ENCODE measurements at regions of chr1 and their contacts with region 1.

Region 1: DNA sequence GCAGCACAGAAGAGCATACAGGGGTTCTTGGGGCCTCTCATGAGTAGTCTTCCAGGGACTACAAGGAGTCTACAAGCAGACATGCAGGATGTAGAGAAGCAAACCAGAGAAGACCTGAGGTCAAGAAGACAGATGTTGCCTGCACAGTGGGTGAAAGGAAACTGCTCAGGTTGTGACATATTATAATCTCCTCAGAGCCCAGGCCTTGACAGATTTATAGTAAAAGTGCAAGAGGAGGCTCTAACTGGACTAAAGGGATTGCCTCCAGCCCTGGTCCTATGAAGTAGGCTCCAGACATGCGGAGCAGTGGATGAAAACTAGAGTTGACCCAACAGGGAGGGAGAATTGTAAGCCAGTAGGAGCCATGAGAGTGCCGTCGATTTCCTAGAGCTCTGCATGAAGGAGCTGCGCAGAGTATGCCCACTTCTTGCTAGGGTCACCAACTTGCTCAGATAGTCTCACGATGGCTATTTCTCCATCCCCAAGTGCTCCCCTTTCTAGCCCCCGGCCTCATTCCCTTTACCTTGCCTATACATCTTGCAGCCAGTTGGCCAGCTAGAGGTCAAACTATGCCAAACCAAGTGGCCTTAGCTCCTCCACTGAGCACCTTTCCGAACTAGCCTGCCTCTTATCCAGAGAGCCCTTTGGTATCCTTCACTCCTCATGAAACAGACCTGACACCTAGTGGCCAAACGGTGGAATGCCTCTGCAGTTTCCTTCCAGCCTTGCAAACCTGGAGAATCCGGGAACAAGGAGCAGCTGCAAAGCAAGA is 36.2 kb upstream of the IPO9 start:
- DNase-seq: peak; percentile 96
- H3K4me3 Mint-ChIP-seq: no peak overlapping the region
- H3K27ac Mint-ChIP-seq: no peak overlapping the region
- H3K4me1 Mint-ChIP-seq: peaks cover 32% of the 10 kb centered on the region
- H3K27me3 Mint-ChIP-seq: no peaks in the 10 kb centered on the region
- CTCF ChIP-seq: peak; percentile 100

Region 2: GRCh38 chr1:201530741-201531531 is 261.8 kb before region 1 on chr1:
- CTCF ChIA-PET with region 1: interaction called, 54 read pairs
- POLR2A ChIA-PET with region 1: no interaction called
- intact Hi-C with region 1: loop called (anchors 1 kb)
- DNase-seq: peak; percentile 91
- H3K4me3 Mint-ChIP-seq: no peak overlapping the region
- H3K27ac Mint-ChIP-seq: peak overlapping the region; percentile 46
- H3K4me1 Mint-ChIP-seq: peaks cover 9% of the 10 kb centered on the region
- H3K27me3 Mint-ChIP-seq: no peaks in the 10 kb centered on the region
- CTCF ChIP-seq: peak; percentile 99

Region 3: DNA sequence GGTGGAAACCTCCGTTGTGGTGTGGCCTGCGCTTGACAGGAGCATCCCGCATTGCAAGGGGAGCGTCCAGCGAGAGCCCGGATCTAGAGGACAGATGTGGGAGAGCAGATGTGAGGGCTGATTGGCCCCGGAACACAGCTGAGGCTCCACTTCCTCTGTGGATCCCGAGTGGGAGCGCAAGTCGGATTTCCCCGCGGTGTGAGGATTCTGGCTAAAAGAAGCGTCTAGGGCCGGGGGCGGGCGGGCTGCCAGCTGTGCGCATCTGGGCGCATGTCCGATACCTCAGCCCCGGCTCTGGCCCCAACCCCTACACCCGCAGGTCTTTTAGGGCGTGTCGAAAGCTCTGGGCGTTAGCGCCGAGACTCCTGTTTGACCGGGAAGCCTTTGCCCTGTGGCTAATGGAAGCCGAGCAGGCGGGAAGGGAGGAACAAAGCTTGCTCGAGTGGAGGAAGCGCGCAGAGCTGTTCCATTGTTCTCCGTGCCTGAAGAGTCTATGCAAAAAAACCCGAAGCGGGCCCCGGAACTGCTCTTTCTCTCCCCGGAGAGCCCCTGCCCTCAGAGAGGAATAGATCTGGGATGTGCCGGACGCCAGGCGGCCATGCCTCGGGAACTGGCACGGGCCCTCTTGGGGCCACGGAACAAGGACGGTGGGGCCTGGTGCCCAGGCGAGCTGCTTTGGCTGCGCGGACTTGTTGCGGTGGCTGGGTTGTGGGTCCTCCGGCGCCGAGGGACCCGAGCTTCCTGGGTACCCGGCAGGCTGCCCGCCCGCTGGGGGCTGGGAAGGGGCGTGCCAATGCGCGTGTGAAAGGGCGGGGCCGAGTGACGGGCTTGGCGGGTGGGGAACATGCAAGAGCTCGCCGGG is 142.7 kb before region 1 on chr1:
- CTCF ChIA-PET with region 1: interaction called, 4 read pairs
- POLR2A ChIA-PET with region 1: interaction called, 3 read pairs
- intact Hi-C with region 1: loop called (anchors 2 kb)
- DNase-seq: peak; percentile 85
- H3K4me3 Mint-ChIP-seq: peak overlapping the region; percentile 80
- H3K27ac Mint-ChIP-seq: peak overlapping the region; percentile 79
- H3K4me1 Mint-ChIP-seq: peaks cover 15% of the 10 kb centered on the region
- H3K27me3 Mint-ChIP-seq: no peaks in the 10 kb centered on the region
- CTCF ChIP-seq: no peak

Region 4: GRCh38 chr1:201739492-201740085 is 53.1 kb before region 1 on chr1:
- CTCF ChIA-PET with region 1: interaction called, 146 read pairs
- POLR2A ChIA-PET with region 1: interaction called, 5 read pairs
- intact Hi-C with region 1: loop called (anchors 1 kb)
- DNase-seq: peak; percentile 87
- H3K4me3 Mint-ChIP-seq: peak overlapping the region; percentile 91
- H3K27ac Mint-ChIP-seq: peak overlapping the region; percentile 87
- H3K4me1 Mint-ChIP-seq: peaks cover 46% of the 10 kb centered on the region
- H3K27me3 Mint-ChIP-seq: no peaks in the 10 kb centered on the region
- CTCF ChIP-seq: no peak

Region 5: DNA sequence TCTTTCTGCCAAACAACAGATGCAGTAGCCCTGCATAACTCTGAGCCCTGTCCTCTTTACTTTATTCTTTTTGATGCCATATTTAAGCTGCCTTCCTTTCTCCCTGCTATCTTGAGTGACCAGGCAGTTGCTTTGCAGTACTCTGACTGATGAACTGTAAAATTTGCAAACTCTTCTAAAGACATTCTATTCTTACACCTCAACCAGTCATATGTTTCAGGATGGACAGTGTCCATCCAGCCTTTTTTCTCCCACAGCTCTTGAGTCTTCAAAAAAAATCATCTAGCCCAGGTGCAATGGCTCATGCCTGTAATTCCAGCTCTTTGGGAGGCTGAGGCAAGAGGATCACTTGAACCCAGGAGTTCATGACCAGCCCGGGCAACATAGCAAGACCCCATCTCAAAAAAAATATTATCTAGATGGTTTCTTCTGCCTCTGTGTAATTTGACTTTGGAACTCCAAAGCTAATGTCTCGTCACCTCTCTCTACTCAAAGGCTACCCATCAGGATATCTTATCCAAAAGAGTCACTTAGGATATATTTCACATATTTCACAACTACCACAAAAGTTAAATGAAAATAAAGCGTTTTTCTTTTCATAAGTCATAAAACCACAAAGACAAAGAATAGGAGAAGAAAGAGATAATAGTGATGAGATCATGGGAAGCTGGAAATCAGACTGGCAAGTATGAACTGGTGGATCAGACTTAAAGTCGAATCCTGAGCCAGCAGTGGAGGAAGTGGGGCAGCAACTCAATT is 18.3 kb before region 1 on chr1:
- CTCF ChIA-PET with region 1: interaction called, 39 read pairs
- POLR2A ChIA-PET with region 1: interaction called, 3 read pairs
- intact Hi-C with region 1: no loop called
- DNase-seq: no peak
- H3K4me3 Mint-ChIP-seq: no peak overlapping the region
- H3K27ac Mint-ChIP-seq: no peak overlapping the region
- H3K4me1 Mint-ChIP-seq: peaks cover 54% of the 10 kb centered on the region
- H3K27me3 Mint-ChIP-seq: no peaks in the 10 kb centered on the region
- CTCF ChIP-seq: no peak

Region 6: DNA sequence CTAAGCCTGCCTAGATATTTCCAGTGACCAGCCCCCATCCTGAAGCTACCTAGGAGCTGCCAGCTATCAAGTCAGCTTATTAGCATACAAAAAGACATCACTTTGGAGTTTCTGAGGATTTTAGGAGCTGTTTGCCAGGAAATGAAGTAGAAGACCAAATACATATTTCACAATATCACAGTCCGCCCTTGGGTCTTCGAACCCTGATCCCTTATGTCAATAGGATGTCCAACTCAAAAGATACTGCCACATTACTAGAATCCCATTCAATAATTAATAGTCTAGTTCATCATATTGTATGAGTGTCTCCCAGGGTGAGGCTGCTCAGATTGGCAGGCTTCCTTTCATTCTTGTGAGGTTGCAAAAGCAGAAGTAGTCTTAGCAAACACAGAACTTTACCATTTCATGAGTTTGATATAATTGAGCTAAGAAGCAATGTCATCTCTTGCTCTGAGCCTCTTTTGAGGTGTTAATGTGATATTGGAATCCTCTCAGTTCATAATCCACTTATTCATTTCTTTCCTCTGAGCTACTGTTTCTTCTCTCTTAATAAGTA is 49.8 kb after region 1 on chr1:
- CTCF ChIA-PET with region 1: interaction called, 11 read pairs
- POLR2A ChIA-PET with region 1: no interaction called
- intact Hi-C with region 1: no loop called
- DNase-seq: no peak
- H3K4me3 Mint-ChIP-seq: no peak overlapping the region
- H3K27ac Mint-ChIP-seq: peak overlapping the region; percentile 11
- H3K4me1 Mint-ChIP-seq: peaks cover 41% of the 10 kb centered on the region
- H3K27me3 Mint-ChIP-seq: no peaks in the 10 kb centered on the region
- CTCF ChIP-seq: no peak

Measured in MCF 10A (cell line).